MCF 10A (cell line): ENCODE measurements at regions of chr2 and their contacts with region 1.

Region 1: DNA sequence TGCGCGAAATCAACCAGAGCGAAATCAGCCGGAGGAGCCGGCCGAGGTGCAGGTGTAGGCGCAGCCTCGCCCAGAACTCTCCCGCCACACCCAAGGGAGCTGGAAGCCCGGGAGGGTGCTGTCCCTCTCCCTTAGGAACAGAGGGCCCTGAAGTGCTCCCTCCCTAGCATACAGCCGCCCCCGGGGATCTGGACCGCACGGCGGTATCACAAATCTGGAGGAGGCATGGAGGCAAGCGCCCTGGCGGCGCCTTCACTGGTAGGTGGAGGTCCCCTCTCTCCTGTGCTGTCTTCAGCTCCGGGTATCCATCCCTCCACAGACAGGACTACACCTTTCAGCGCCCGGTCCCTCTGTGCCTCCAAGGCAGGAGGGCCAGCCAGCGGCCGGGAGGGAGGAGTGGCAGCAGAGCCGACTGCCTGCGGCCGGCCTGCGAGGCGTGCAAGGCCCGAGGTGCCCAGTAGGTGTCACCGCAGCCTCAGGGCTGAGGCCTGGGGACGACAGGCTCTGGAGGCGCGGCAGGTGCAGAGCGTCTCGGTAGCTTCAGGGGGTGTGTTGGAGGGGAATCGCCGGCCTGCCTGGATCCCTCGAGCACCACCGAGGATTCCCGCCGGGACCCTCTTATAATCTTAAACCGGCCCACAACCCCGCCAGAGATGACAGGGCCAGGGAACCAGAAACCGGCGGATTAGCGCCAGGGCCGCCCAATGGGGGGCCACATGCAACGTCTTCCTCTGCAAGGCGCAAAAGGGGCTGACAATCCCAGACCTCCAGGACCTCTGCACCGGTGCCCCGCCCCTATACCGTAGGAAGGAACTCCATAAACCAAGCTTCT is 2.8 kb downstream of the IHH start:
- DNase-seq: peak; percentile 51
- H3K4me3 Mint-ChIP-seq: no peak overlapping the region
- H3K27ac Mint-ChIP-seq: no peak overlapping the region
- H3K4me1 Mint-ChIP-seq: no peaks in the 10 kb centered on the region
- H3K27me3 Mint-ChIP-seq: peaks cover 63% of the 10 kb centered on the region
- CTCF ChIP-seq: peak; percentile 95

Region 2: GRCh38 chr2:218260742-218261437 is 797.0 kb before region 1 on chr2 and contains the start of gene GPBAR1:
- CTCF ChIA-PET with region 1: no interaction called
- POLR2A ChIA-PET with region 1: no interaction called
- intact Hi-C with region 1: no loop called
- DNase-seq: no peak
- H3K4me3 Mint-ChIP-seq: no peak within 1 kb of the TSS
- H3K27ac Mint-ChIP-seq: no peak within 1 kb of the TSS
- H3K4me1 Mint-ChIP-seq: no peaks in the 10 kb centered on the region
- H3K27me3 Mint-ChIP-seq: no peaks in the 10 kb centered on the region
- CTCF ChIP-seq: no peak
- total RNA-seq, gene GPBAR1: 0.16 TPM in 1 of 2 replicates, not detected in the other

Region 3: DNA sequence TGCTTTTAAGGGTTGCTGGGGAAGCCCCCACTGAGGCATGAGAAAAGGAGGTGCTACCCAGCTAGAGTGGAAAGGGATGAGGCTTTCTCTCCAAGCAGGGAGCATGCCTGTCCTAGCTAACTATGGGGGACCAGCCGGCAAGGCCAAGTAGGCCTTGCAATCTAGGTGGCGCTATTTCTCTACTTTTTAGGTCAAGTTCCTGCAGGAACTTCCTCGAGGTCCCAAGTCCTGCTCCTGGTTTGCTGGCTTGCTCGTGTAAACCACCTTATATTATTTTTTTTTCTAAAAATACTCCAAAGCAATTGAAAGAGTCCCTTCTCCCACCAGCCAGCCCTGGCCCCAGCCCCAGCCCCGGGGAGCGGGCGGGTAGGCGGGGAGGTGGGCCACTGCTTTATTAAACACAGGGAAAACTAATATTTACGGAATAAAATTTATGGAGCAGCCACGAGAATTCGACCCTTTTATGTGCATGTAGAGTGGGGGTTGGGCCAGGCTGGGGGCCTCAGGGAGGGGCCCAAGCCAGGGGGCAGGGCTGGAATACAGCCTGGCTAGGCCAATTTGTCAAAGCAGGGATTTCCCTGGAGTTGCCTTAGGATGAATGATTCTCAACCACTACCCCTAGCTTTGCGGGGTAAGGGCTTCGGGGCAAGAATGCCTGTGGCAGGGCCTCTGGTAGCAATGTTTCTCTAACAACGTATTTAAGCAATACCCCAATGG is 15.6 kb after region 1 on chr2:
- CTCF ChIA-PET with region 1: interaction called, 19 read pairs
- POLR2A ChIA-PET with region 1: interaction called, 3 read pairs
- intact Hi-C with region 1: no loop called
- DNase-seq: peak; percentile 57
- H3K4me3 Mint-ChIP-seq: no peak overlapping the region
- H3K27ac Mint-ChIP-seq: peak overlapping the region; percentile 7
- H3K4me1 Mint-ChIP-seq: peaks cover 13% of the 10 kb centered on the region
- H3K27me3 Mint-ChIP-seq: no peaks in the 10 kb centered on the region
- CTCF ChIP-seq: peak; percentile 57

Region 4: GRCh38 chr2:219104107-219105035 is 46.4 kb after region 1 on chr2:
- CTCF ChIA-PET with region 1: interaction called, 6 read pairs
- POLR2A ChIA-PET with region 1: no interaction called
- intact Hi-C with region 1: loop called (anchors 1 kb)
- DNase-seq: peak; percentile 60
- H3K4me3 Mint-ChIP-seq: no peak overlapping the region
- H3K27ac Mint-ChIP-seq: no peak overlapping the region
- H3K4me1 Mint-ChIP-seq: no peaks in the 10 kb centered on the region
- H3K27me3 Mint-ChIP-seq: no peaks in the 10 kb centered on the region
- CTCF ChIP-seq: peak; percentile 82

Region 5: DNA sequence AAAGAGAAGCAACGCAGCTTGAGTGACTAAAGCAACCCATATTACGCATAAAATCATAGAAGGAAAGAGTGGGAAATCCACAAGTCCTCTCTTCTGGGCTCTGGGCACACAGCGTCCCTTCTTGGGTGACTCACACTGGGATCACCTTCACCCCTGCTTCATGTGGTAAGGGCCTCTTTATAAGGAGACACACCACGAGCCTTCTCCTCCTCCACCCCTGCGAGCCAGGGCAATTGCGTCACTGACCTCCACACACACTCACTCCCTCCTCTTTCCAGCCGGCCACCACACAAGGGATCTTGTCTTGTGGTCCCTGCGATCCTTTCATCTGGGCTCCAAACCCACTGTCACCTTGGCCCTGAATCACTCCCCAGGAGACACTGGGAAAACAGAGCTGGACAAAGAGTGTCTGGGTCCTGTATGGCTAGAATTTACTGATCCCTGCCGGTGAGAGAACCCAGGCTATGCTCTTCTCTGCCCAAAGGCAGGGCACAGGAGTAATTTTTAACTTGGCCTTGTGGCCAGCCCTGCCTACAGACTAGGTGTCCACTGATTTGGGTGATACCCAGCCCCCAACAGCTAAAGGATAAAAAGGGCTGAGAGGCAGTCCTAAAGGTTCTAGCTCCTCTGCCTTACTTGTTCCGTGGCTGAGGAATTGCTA is 67.4 kb after region 1 on chr2:
- CTCF ChIA-PET with region 1: interaction called, 57 read pairs
- POLR2A ChIA-PET with region 1: interaction called, 4 read pairs
- intact Hi-C with region 1: loop called (anchors 2 kb)
- DNase-seq: peak; percentile 92
- H3K4me3 Mint-ChIP-seq: peak overlapping the region; percentile 33
- H3K27ac Mint-ChIP-seq: peak overlapping the region; percentile 93
- H3K4me1 Mint-ChIP-seq: peaks cover 43% of the 10 kb centered on the region
- H3K27me3 Mint-ChIP-seq: no peaks in the 10 kb centered on the region
- CTCF ChIP-seq: no peak

Region 6: GRCh38 chr2:219484343-219485200 is 426.6 kb after region 1 on chr2:
- CTCF ChIA-PET with region 1: no interaction called
- POLR2A ChIA-PET with region 1: no interaction called
- intact Hi-C with region 1: no loop called
- DNase-seq: no peak
- H3K4me3 Mint-ChIP-seq: no peak overlapping the region
- H3K27ac Mint-ChIP-seq: no peak overlapping the region
- H3K4me1 Mint-ChIP-seq: no peaks in the 10 kb centered on the region
- H3K27me3 Mint-ChIP-seq: no peaks in the 10 kb centered on the region
- CTCF ChIP-seq: no peak